ENCODE measurements at regions of chr14 and their contacts with region 1.

Region 1: GRCh38 chr14:93042968-93043940 is 72.5 kb downstream of the ITPK1 start:
- DNase-seq: peak in 1 of 2 donors; percentile 91
- H3K4me3 ChIP-seq: no peak overlapping the region
- H3K27ac ChIP-seq: peak overlapping the region; percentile 71 to 85
- H3K4me1 ChIP-seq: peaks cover 18 to 55% of the 10 kb centered on the region in 2 donors
- H3K27me3 ChIP-seq: no peaks in the 10 kb centered on the region
- CTCF ChIP-seq: no peak

Region 2: GRCh38 chr14:92880869-92881289 is 162.4 kb before region 1 on chr14:
- intact Hi-C with region 1: no loop called
- DNase-seq: no peak
- H3K4me3 ChIP-seq: no peak overlapping the region
- H3K27ac ChIP-seq: no peak overlapping the region
- H3K4me1 ChIP-seq: no peaks in the 10 kb centered on the region
- H3K27me3 ChIP-seq: no peaks in the 10 kb centered on the region
- CTCF ChIP-seq: no peak

Region 3: GRCh38 chr14:93007225-93007997 is 35.8 kb before region 1 on chr14:
- intact Hi-C with region 1: loop called (anchors 2 kb)
- DNase-seq: peak; percentile 45 to 83
- H3K4me3 ChIP-seq: no peak overlapping the region
- H3K27ac ChIP-seq: peak overlapping the region; percentile 37 to 49
- H3K4me1 ChIP-seq: peaks cover 9 to 44% of the 10 kb centered on the region in 2 donors
- H3K27me3 ChIP-seq: no peaks in the 10 kb centered on the region
- CTCF ChIP-seq: no peak

Measured in ascending aorta (tissue), 2 donors.